Activated naive CD4-positive, alpha-beta T cell treated with anti-CD3 and anti-CD28 coated beads for 36 hours (primary cell): ENCODE measurements at regions of chr6 and their contacts with region 1.

Region 1: GRCh38 chr6:42563697-42564505 is at the start of gene UBR2:
- DNase-seq: peak; percentile 98
- H3K4me3 Mint-ChIP-seq: peak within 1 kb of the TSS; percentile 97
- H3K27ac Mint-ChIP-seq: peak within 1 kb of the TSS; percentile 92
- H3K4me1 Mint-ChIP-seq: peaks cover 26% of the 10 kb centered on the region
- H3K27me3 Mint-ChIP-seq: no peaks in the 10 kb centered on the region
- total RNA-seq, gene UBR2: 23.1 to 23.5 TPM

Region 2: GRCh38 chr6:41735427-41736356 is 828.2 kb before region 1 on chr6 and contains the start of gene TFEB:
- CTCF ChIA-PET with region 1: no interaction called
- intact Hi-C with region 1: loop called (anchors 5 kb)
- DNase-seq: peak; percentile 96
- H3K4me3 Mint-ChIP-seq: peak within 1 kb of the TSS; percentile 72
- H3K27ac Mint-ChIP-seq: no peak within 1 kb of the TSS
- H3K4me1 Mint-ChIP-seq: peaks cover 21% of the 10 kb centered on the region
- H3K27me3 Mint-ChIP-seq: no peaks in the 10 kb centered on the region
- total RNA-seq, gene TFEB: 5.7 to 7.9 TPM

Region 3: DNA sequence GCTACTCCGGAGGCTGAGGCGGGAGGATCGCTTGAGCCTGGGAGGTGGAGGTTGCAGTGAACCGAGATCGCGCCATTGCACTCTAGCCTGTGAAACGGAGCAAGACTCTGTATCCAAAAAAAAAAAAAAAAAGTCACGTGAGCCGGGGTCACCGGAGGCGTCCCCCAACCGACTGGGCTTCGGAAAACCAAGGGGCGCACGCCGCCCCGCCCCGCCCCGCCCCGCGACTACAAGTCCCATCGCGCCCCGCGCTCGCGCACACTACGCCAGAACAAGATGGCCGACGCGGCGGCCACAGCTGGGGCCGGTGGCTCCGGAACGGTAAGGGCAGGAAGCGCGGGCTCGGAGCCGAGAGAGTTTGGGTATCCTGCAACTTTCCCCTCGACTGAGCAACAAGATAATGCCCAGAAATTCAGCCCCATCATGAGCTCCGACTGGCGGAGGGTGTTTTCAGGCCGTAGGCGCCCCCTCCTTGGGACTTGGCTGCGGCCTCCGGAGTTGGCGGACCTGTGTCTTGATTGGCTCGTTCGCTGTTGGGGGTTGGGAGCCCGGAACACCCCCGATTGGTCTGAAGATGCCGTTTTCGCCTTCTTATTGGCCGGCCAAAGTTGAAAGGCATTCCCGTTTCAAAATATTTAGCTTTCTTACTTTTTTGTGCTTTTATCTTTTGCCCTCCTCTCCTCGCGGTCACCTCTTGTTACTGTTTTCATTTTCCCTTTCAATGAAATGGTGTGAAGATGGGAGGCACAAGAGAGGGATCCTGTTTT is 513.5 kb before region 1 on chr6 and contains the start of gene TAF8:
- CTCF ChIA-PET with region 1: no interaction called
- intact Hi-C with region 1: loop called (anchors 1 kb)
- DNase-seq: peak; percentile 95
- H3K4me3 Mint-ChIP-seq: peak within 1 kb of the TSS; percentile 83
- H3K27ac Mint-ChIP-seq: peak within 1 kb of the TSS; percentile 88
- H3K4me1 Mint-ChIP-seq: peaks cover 64% of the 10 kb centered on the region
- H3K27me3 Mint-ChIP-seq: no peaks in the 10 kb centered on the region
- total RNA-seq, gene TAF8: 67.3 to 68.5 TPM

Region 4: GRCh38 chr6:42471142-42471541 is 92.8 kb before region 1 on chr6:
- CTCF ChIA-PET with region 1: no interaction called
- intact Hi-C with region 1: no loop called
- DNase-seq: no peak
- H3K4me3 Mint-ChIP-seq: no peak overlapping the region
- H3K27ac Mint-ChIP-seq: no peak overlapping the region
- H3K4me1 Mint-ChIP-seq: no peaks in the 10 kb centered on the region
- H3K27me3 Mint-ChIP-seq: no peaks in the 10 kb centered on the region

Region 5: GRCh38 chr6:42771741-42772100 is 207.8 kb after region 1 on chr6:
- CTCF ChIA-PET with region 1: no interaction called
- intact Hi-C with region 1: loop called (anchors 2 kb)
- DNase-seq: no peak
- H3K4me3 Mint-ChIP-seq: peak overlapping the region; percentile 71
- H3K27ac Mint-ChIP-seq: peak overlapping the region; percentile 96
- H3K4me1 Mint-ChIP-seq: peaks cover 62% of the 10 kb centered on the region
- H3K27me3 Mint-ChIP-seq: no peaks in the 10 kb centered on the region

Region 6: DNA sequence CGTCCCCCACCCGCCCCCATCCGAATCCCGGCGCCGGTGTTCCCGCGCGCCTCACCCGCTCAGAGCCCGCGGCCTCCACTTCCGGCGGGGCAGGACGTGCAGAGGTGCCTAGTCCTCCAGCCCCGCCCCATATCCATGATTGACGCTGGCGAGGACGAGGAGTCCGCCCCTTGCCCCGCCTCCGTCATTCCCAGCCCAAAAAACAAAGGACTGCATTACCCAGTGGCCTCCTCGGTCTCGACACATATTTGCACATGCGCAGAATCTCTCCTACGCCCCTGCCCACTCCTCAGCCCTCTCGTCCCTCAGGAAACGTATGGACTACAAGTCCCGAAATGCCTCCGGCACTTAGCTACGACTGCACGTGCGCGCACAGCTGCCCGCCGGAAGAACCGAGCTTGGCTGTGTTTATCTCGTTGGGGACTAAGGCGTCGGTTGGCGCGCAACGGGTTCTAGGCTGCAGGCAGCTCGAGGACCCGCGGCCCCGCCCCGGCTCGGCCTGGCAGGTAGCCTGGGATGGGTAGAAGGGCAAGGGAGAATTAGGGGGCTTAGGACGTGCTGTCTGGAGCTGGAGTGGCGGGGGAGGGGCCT is 450.0 kb after region 1 on chr6 and contains the starts of genes KLHDC3 and MEA1:
- CTCF ChIA-PET with region 1: no interaction called
- intact Hi-C with region 1: loop called (anchors 2 kb)
- DNase-seq: peak; percentile 100
- H3K4me3 Mint-ChIP-seq: peak within 1 kb of the TSS; percentile 95
- H3K27ac Mint-ChIP-seq: peak within 1 kb of the TSS; percentile 88
- H3K4me1 Mint-ChIP-seq: peaks cover 53% of the 10 kb centered on the region
- H3K27me3 Mint-ChIP-seq: no peaks in the 10 kb centered on the region
- total RNA-seq, gene KLHDC3: 58.6 to 58.9 TPM
- total RNA-seq, gene MEA1: 80.6 to 85.1 TPM